A549 (cell line): ENCODE measurements at regions of chr19 and their contacts with region 1.

Region 1: GRCh38 chr19:32224371-32225244 is 120.8 kb upstream of the ZNF507 start:
- DNase-seq: peak; percentile 71 to 91
- ATAC-seq: peak; percentile 82 to 96
- H3K4me3 ChIP-seq: no peak overlapping the region
- H3K27ac ChIP-seq: no peak overlapping the region
- H3K4me1 ChIP-seq: no peaks in the 10 kb centered on the region
- CTCF ChIP-seq: peak; percentile 100
- EP300 ChIP-seq: no peak
- POLR2A ChIP-seq: no peak
- RAD21 ChIP-seq: peak; percentile 94 to 100

Region 2: DNA sequence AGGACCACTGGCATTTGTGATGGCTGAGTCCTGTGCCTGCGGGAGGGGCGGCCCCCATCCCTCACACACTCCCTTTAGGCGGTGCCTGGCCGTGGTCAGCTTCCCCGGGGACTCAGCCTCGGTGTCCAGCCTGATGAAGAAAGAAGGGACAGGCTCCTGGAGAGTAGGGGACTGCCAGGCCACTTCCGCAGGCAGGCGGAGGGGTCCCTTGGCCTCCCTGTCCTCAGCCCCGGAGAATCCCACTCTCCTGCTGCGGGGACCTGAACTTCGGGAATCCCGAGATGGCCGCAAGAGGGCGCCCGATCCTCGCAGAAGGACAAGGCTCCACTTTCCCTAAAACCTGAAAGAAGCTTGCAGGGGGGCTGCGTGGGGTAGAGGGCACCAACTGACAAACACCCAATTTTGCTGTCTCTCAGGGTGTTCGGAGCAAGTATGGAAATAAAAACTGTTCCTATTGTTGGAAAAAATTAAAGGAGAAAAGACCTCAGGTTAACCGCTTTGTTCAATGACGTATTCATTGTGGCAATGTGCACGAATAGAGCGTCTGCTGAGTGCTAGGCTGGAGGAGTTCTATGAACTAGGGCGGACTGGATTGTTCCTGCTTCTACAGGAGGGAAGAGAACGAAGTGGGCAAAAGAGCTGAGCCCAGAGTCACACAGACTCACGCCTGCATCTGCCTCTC is 1555.1 kb before region 1 on chr19:
- CTCF ChIA-PET with region 1: interaction called, 124 read pairs
- POLR2A ChIA-PET with region 1: no interaction called
- DNase-seq: peak; percentile 61 to 66
- ATAC-seq: peak; percentile 61 to 88
- H3K4me3 ChIP-seq: no peak overlapping the region
- H3K27ac ChIP-seq: no peak overlapping the region
- H3K4me1 ChIP-seq: peaks cover 8% of the 10 kb centered on the region; the same call in 1 of the 3 replicates
- CTCF ChIP-seq: peak; percentile 96
- EP300 ChIP-seq: no peak
- POLR2A ChIP-seq: no peak
- RAD21 ChIP-seq: peak; percentile 88

Region 3: GRCh38 chr19:30710721-30711120 is 1513.9 kb before region 1 on chr19:
- CTCF ChIA-PET with region 1: interaction called, 11 read pairs
- POLR2A ChIA-PET with region 1: no interaction called
- DNase-seq: no peak
- ATAC-seq: no peak
- H3K4me3 ChIP-seq: no peak overlapping the region
- H3K27ac ChIP-seq: no peak overlapping the region
- H3K4me1 ChIP-seq: no peaks in the 10 kb centered on the region
- CTCF ChIP-seq: no peak
- EP300 ChIP-seq: no peak
- POLR2A ChIP-seq: no peak
- RAD21 ChIP-seq: no peak

Region 4: DNA sequence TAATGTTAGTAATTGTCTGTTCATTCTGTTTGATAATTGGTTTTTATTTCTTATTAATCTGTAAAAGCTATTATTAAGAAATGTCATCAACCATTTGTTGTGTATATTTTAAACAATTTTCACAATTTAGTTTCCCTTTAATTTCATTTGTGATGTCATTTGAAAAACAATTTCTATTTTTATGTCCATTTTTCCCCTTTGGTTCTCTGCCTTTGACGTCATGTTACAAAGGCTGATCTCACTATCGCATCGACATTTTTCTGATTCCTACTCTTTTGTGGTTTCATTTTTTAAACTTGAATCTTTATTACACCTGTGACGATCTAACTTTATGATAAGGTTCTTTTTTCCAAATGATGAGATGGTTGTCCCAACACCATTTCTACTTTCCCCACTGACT is 70.2 kb before region 1 on chr19:
- CTCF ChIA-PET with region 1: no interaction called
- POLR2A ChIA-PET with region 1: no interaction called
- DNase-seq: no peak
- ATAC-seq: no peak
- H3K4me3 ChIP-seq: no peak overlapping the region
- H3K27ac ChIP-seq: no peak overlapping the region
- H3K4me1 ChIP-seq: no peaks in the 10 kb centered on the region
- CTCF ChIP-seq: no peak
- EP300 ChIP-seq: no peak
- POLR2A ChIP-seq: no peak
- RAD21 ChIP-seq: no peak

Region 5: GRCh38 chr19:32191921-32192320 is 32.7 kb before region 1 on chr19:
- CTCF ChIA-PET with region 1: interaction called, 21 read pairs
- POLR2A ChIA-PET with region 1: no interaction called
- DNase-seq: no peak
- ATAC-seq: no peak
- H3K4me3 ChIP-seq: no peak overlapping the region
- H3K27ac ChIP-seq: no peak overlapping the region
- H3K4me1 ChIP-seq: no peaks in the 10 kb centered on the region
- CTCF ChIP-seq: no peak
- EP300 ChIP-seq: no peak
- POLR2A ChIP-seq: no peak
- RAD21 ChIP-seq: no peak

Region 6: DNA sequence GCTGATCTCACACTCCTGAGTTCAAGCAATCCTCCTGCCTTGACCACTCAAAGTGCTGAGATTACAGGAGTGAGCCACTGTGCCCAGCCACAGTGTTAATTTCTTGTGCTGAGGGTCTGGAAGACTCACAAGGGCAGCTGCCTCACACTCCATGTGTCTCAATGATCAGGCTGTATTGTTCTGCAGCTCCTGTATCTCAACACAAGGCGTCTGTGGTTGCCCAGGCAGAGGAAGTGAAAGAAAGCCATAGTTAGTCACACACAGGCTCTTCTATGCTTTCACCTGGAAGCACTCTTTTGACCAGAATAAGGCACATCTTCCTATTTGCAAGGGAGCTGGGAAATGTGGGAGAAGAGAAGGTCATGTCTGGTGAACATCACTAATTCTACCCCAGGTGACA is 13.5 kb after region 1 on chr19:
- CTCF ChIA-PET with region 1: interaction called, 69 read pairs
- POLR2A ChIA-PET with region 1: no interaction called
- DNase-seq: no peak
- ATAC-seq: peak in 1 of 2 experiments; percentile 54; a peak in 3 of 6 replicates
- H3K4me3 ChIP-seq: no peak overlapping the region
- H3K27ac ChIP-seq: no peak overlapping the region
- H3K4me1 ChIP-seq: no peaks in the 10 kb centered on the region
- CTCF ChIP-seq: no peak
- EP300 ChIP-seq: no peak
- POLR2A ChIP-seq: no peak
- RAD21 ChIP-seq: no peak